Sciatic nerve (tissue), 2 donors: ENCODE measurements at regions of chr11 and their contacts with region 1.

Region 1: DNA sequence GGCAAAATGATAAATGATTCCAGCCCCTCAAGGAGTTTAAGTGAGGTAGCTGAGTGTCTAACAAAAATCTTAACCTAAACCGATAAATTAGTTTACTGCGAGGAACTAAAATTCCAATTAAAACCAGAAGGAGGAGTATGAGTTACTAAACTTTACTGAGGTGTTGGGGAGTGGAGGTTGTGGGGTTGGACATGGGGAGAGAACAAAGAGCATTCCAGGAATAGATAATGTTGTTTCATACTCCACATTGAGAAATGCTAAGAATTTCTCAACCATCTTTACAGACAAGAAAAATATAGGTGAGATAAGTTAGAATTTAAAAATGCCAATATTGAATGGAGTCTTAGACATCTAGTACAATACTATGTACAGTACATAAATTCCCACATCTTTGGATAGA is 488.6 kb downstream of the METTL15 start:
- DNase-seq: no peak
- ATAC-seq: no peak

Region 2: DNA sequence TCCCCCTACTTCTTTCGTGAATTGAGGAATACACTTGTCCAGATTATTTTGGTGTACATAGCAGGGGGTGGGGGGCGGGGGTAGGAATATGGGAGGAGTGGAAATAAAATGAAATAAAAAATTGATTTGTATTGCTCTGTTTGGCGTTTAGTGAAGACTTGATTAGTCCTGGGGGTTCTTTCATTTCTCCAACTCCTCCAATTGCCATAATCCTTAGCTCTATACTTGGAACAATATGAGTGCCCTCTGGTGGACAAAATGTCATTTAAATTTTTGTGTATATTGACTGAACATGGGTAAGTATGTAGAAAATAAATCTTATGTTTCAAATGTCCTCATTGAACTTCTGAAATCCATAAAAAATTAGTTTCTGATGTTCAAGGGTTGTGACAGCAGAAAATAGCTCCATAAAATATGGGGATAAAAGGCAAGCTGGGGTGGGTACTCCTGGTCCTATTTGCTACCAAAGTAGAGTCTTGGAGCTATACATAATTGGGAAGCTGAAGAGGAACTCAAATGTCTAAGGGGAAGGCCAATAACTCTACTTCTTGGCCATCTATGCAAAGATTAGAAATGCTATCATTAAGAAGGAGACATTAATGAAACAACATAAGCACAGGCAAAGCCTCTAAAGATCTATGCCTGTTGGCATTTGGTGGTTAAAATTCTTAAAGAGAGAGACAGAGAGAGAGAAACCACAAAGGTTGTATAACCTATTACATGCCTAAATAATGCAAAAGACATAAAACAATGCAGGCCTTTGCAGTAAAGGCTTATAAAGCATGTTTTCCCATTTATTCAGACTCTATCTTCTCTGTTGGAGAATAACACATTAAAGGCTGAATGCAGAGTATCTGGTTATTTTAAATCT is 67.0 kb before region 1 on chr11:
- intact Hi-C with region 1: loop called (anchors 10 kb)
- DNase-seq: no peak
- ATAC-seq: no peak